ENCODE measurements at regions of chr1 and their contacts with region 1.

Region 1: DNA sequence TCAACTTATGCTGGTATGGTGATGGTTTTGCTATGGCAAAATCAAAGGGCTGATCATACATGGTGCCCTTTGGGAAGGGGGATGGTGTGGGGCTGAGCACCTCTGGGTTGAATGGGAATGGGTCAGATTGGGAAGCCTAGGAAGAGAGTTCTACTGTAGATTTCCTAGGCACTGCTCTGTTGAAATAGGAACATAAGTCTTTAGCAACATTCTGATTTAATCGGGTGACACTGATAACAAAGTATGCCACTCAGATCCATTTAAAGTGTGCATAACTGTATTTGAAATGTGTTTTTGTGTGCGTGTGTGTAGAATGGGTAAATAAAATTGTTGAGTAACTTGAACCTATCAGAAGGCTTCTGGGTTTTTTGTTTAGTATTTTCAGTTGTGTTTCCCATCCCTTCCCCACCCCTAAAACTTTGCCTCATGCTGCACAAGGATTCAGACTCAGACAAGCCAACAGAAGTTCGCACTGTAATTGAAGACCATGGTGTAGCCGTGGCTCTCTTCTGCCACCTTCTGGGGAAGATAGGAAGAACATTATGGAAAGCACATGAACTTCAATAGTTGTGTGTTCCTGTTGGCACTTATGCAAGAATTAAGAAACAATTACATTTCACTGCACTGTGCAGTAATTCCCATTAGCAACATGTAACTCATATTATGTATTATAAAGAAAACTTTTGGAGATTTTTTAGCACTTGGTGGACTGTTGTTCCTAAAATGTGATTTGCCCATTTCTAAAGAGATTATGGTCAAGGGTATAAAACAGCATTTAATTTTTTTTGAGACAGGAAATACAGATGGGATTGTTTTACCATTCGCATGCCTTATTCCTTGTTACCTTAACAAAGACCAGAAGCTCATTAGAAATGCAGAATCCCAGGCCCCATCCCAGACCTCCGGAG is 10.9 kb upstream of the C4BPB start:
- DNase-seq: peak; percentile 83
- H3K4me3 Mint-ChIP-seq: no peak overlapping the region
- H3K27ac Mint-ChIP-seq: no peak overlapping the region
- H3K4me1 Mint-ChIP-seq: peaks cover 9% of the 10 kb centered on the region
- H3K27me3 Mint-ChIP-seq: no peaks in the 10 kb centered on the region
- CTCF ChIP-seq: peak; percentile 73

Region 2: GRCh38 chr1:206734499-206735142 is 343.1 kb before region 1 on chr1:
- CTCF ChIA-PET with region 1: no interaction called
- intact Hi-C with region 1: loop called (anchors 10 kb)
- DNase-seq: peak; percentile 77
- H3K4me3 Mint-ChIP-seq: no peak overlapping the region
- H3K27ac Mint-ChIP-seq: no peak overlapping the region
- H3K4me1 Mint-ChIP-seq: peaks cover 13% of the 10 kb centered on the region
- H3K27me3 Mint-ChIP-seq: no peaks in the 10 kb centered on the region
- CTCF ChIP-seq: peak; percentile 89

Region 3: DNA sequence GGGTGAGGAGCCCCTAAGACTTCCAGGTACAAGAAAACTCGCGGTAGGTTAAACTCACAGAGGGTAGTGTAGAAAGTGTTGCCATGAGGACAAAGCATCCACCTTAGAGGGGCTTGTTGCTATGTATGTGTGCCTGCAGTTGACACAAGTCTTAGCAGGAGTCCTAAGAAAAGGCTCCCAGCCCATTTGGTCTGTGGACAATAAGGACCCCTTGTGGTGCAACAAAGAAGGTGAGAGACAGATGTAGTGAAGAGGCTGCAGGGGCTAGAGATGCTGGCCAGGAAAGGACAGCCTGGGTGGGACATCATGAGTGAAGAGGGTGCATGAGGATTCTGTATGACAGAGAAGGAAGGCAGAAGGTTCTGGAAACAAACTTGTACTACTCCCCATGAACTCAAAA is 269.1 kb before region 1 on chr1:
- CTCF ChIA-PET with region 1: no interaction called
- intact Hi-C with region 1: loop called (anchors 10 kb)
- DNase-seq: peak; percentile 21
- H3K4me3 Mint-ChIP-seq: no peak overlapping the region
- H3K27ac Mint-ChIP-seq: no peak overlapping the region
- H3K4me1 Mint-ChIP-seq: no peaks in the 10 kb centered on the region
- H3K27me3 Mint-ChIP-seq: peaks cover 97% of the 10 kb centered on the region
- CTCF ChIP-seq: no peak

Region 4: GRCh38 chr1:207052911-207053769 is 24.6 kb before region 1 on chr1 and contains the start of gene PFKFB2:
- CTCF ChIA-PET with region 1: no interaction called
- intact Hi-C with region 1: loop called (anchors 2 kb)
- DNase-seq: peak; percentile 100
- H3K4me3 Mint-ChIP-seq: peak within 1 kb of the TSS; percentile 97
- H3K27ac Mint-ChIP-seq: peak within 1 kb of the TSS; percentile 93
- H3K4me1 Mint-ChIP-seq: peaks cover 58% of the 10 kb centered on the region
- H3K27me3 Mint-ChIP-seq: no peaks in the 10 kb centered on the region
- CTCF ChIP-seq: peak; percentile 45
- total RNA-seq, gene PFKFB2: 52.0 and 54.4 TPM in 2 replicates

Measured in Calu3 (cell line).